HCT116 (cell line): ENCODE measurements at regions of chr19 and their contacts with region 1.

Region 1: DNA sequence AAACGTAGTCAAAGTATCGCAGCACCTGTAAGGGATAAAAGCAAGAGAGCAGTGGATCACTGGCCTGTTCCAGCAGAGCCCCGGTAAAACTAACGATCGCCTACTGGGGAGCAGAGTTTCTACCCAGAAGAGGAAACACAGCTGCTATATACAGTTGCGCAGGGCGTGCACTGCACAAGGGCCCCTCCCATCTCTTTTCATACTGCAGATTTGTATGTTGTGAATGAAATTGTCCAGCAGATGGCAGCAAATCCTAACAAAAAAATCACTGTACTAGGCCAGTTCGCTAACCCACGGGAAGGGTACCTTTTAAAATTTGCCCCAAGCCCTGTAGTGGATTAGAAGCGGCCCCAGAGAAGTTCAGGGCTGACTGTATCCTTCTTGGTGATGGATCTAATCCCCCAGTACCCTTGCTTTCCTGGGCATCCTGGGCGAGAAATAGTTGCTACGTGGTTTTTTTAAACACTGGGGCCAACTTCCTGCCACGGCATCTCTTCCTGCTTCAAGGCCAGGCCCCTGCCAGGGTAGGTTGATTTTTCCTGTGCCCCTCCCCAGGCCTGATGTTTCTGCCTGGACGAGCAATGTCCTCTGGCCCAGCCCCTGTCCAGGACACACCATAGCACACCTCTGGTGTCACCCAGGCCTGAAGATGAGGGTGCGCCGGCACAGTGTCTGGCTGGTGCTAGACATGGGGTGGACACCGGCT is 127.0 kb downstream of the IER2 start:
- DNase-seq: peak; percentile 80
- ATAC-seq: peak; percentile 94
- H3K4me3 ChIP-seq: peak overlapping the region; percentile 33 to 35
- H3K27ac ChIP-seq: peak overlapping the region; percentile 11; the same call in 1 of the 2 replicates
- H3K4me1 ChIP-seq: peaks cover 4 to 32% of the 10 kb centered on the region in 2 experiments; a peak in 3 of 4 replicates
- H3K27me3 ChIP-seq: no peaks in the 10 kb centered on the region
- CTCF ChIP-seq: peak; percentile 47 to 88 (median 74)
- POLR2A ChIP-seq: no peak
- RAD21 ChIP-seq: peak; percentile 92

Region 2: DNA sequence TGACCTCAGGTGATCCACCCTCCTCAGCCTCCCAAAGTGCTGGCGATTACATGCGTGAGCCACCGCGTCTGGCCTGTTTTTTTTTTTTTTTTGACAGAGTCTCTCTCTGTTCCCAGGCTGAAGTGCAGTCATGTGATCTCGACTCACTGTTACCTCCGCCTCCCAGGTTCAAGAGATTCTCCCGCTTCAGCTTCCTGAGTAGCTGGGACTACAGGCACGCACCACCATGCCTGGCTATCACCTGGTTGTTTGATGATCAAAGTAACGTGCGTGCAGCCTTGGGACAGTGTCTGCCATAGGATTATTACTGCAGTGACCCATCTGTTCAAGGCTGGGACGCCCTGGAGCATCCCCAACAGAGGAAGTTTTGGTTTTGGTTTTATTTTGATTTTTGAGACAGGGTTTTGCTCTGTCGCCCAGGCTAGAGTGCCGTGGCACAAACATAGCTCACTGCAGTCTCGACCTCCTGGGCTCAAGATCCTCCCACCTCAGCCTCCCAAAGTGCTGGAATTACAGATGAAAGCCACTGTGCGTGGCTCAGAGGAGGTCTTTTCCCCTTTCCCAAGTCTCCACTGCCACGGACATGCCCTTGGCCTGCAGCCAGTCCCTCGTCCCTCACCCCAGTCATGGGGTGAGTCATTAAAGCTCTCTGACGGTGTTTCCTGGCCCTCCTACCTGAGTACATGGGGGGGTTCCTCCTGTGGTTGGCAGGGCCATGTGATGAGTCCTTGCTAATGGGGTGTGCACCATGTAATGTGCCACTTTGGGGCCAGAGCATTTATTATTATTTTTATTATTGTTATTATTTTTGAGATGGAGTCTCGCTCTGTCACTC is 61.5 kb before region 1 on chr19:
- CTCF ChIA-PET with region 1: no interaction called
- POLR2A ChIA-PET with region 1: no interaction called
- RAD21 ChIA-PET with region 1: no interaction called
- intact Hi-C with region 1: no loop called
- DNase-seq: no peak
- ATAC-seq: peak; percentile 44; the same call in 1 of the 2 replicates
- H3K4me3 ChIP-seq: no peak overlapping the region; a peak in 1 of 4 replicates
- H3K27ac ChIP-seq: no peak overlapping the region
- H3K4me1 ChIP-seq: peaks cover 6 to 8% of the 10 kb centered on the region in 2 experiments
- H3K27me3 ChIP-seq: no peaks in the 10 kb centered on the region
- CTCF ChIP-seq: no peak
- POLR2A ChIP-seq: no peak
- RAD21 ChIP-seq: no peak

Region 3: DNA sequence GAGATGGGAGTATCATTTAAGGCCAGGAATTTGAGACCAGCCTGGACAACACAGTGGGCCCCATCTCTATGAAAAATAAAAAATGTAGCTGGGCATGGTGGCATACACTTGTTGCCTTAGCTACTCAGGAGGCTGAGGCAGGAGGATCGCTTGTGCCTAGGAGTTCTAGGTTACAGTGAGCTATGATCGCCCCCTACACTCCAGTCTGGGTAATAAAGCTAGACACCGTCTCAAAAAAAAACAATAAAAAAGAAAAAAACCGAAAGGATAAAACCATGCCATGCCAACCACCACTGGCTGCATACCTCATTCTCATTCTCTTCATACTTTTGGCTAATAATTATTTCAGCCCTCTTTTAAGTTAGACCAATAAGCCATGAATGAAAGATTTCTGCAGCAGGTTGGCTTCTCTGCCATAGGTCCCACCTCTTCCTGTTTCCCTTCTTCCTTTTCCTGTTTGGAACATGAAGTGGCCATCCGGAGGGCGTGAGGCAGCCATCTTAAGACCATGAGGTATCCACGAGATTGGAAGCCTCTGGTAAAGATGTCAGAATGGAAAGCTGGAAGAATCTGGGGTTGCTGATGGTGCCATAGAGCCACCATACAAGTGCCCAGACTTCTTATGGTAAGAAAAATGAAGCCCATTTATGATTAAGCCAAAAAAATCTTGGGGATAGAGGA is 57.7 kb after region 1 on chr19:
- CTCF ChIA-PET with region 1: interaction called, 99 read pairs
- POLR2A ChIA-PET with region 1: interaction called, 4 read pairs
- RAD21 ChIA-PET with region 1: interaction called, 11 to 14 read pairs
- intact Hi-C with region 1: loop called (anchors 1 kb)
- DNase-seq: peak; percentile 90
- ATAC-seq: peak; percentile 91
- H3K4me3 ChIP-seq: peak overlapping the region; percentile 70 to 84
- H3K27ac ChIP-seq: peak overlapping the region; percentile 64
- H3K4me1 ChIP-seq: peaks cover 2 to 15% of the 10 kb centered on the region in 2 experiments; a peak in 2 of 4 replicates
- H3K27me3 ChIP-seq: no peaks in the 10 kb centered on the region
- CTCF ChIP-seq: peak; percentile 67 to 85 (median 78)
- POLR2A ChIP-seq: peak; percentile 40
- RAD21 ChIP-seq: peak; percentile 82

Region 4: DNA sequence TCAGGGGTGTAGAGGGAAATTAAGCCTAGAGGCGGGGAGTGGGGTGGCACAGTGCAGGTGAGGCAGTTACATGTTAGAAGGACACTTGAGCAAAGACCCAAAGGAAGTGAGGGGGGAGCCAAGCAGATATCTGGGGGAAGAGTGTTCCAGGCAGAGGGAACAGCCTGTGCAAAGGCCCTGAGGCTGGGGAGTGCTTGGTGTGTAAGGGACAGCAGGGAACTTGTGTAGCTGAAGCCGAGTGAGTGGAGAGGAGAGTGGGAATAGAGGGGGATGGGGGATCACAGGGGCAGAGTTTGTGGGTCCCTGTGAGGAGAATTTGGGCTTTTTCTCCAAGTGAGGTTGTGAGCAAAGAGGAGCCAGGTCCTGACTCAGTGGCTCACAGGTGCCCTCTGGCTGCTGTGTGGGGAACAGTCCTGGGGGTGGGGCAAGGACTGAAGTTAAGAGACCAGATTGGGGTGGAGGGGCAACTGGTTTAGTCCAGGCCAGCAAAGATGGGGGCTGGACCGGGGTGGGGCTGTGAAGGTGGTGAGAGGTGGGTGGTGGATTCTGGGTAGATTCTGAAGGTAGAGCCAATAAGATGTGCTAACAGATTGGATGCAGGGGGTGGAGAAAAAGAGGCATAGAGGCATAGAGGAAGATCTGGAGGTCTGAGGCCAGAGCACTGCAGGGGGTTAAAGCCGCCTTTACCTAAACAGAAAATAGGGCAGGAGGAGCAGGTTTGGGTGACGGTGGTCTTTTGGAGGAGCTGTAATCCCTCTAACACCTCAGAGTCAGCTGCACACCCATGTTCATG is 153.7 kb after region 1 on chr19:
- CTCF ChIA-PET with region 1: interaction called, 7 read pairs
- POLR2A ChIA-PET with region 1: no interaction called
- RAD21 ChIA-PET with region 1: no interaction called
- intact Hi-C with region 1: loop called (anchors 1 kb)
- DNase-seq: peak; percentile 51
- ATAC-seq: peak; percentile 93
- H3K4me3 ChIP-seq: no peak overlapping the region
- H3K27ac ChIP-seq: no peak overlapping the region
- H3K4me1 ChIP-seq: no peaks in the 10 kb centered on the region; a peak in 1 of 4 replicates
- H3K27me3 ChIP-seq: no peaks in the 10 kb centered on the region
- CTCF ChIP-seq: peak; percentile 84 to 96 (median 93)
- POLR2A ChIP-seq: no peak
- RAD21 ChIP-seq: peak; percentile 88

Region 5: DNA sequence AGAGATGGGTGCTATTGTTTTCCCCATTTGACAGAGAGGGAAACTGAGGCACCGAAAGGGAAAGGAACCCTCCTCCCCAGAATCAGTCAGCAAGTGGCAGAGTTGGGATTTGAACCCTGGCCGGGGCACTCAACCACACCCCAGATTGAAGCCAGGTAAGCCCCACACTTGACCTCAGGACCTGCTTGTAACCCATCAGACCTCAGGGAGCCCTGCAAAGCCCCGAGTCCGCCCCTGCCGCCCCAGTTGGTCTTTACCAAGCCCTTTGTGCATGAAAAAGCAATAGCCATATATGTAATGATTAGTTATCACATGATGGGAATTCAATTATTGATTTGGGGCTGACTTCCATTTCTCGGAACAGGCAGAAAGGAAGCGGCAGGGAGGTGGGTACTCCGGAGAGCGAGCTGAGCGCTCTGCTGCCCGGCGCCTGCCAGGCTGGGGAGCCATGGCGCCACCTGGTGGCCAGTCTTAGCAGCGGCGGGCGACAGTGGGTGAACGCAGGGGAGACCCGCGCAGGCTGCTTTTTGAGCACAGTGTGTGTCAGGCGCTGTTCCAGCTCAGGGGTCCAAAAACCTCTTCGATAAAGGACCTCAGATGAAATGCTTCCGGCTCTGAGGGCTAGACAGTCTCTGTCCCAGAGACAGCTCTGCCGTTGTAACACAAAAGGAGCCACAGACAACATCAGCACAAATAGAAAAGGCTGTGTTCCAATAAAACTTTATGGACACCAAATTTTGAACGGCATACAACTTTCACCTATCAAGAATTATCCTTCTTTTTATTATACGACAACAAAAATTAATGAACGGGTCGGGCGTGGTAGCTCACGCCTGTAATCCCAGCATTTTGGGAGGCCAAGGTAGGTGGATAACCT is 311.9 kb after region 1 on chr19:
- CTCF ChIA-PET with region 1: interaction called, 42 read pairs
- POLR2A ChIA-PET with region 1: interaction called, 9 read pairs
- RAD21 ChIA-PET with region 1: interaction called, 3 to 8 read pairs
- intact Hi-C with region 1: loop called (anchors 1 kb)
- DNase-seq: peak; percentile 49
- ATAC-seq: peak; percentile 100
- H3K4me3 ChIP-seq: peak overlapping the region; percentile 26 to 41
- H3K27ac ChIP-seq: no peak overlapping the region
- H3K4me1 ChIP-seq: peaks cover 0 to 10% of the 10 kb centered on the region in 2 experiments; a peak in 2 of 4 replicates
- H3K27me3 ChIP-seq: no peaks in the 10 kb centered on the region
- CTCF ChIP-seq: peak; percentile 93 to 98 (median 98)
- POLR2A ChIP-seq: no peak
- RAD21 ChIP-seq: peak; percentile 89

Region 6: DNA sequence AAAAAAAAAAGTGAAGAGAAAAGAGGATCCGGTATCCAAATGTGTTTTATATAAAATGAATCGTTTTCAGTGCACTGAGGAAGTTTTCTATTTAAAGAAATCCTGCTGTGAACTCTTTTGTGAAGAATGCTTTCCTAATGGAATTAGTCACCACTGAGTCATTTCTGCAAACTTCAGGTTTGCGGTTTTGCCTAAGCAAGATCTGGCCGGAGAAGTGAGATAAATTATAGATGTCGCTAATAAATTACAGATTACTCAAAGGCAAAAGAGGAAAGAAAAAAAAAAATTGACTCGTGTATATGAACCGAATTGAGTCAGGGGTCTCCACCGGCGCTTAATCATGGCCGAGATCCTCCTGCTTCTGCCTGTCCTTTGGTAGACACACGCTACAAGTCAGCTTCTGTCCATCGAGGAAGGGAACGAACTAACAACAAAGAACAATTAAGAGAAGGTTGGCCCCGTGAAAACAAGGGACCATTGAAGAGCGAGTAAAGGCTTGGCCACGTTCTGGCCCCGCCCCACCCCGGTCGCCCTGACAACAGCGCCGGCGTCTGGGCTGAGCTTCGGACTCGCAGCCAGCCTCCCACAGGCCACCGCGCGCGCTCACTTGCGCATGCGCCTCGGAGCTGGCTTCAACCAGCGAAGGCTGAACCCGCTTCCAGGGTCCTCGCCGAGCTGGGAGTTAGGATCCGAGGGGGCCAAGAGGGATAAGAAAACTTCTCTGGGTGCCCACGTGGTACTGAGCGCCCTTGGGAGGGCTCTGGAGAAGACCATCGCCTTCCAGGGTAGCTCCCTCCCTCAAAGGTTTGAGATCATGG is 454.1 kb after region 1 on chr19:
- CTCF ChIA-PET with region 1: interaction called, 4 read pairs
- POLR2A ChIA-PET with region 1: no interaction called
- RAD21 ChIA-PET with region 1: no interaction called
- intact Hi-C with region 1: loop called (anchors 10 kb)
- DNase-seq: peak; percentile 94
- ATAC-seq: peak; percentile 98
- H3K4me3 ChIP-seq: peak overlapping the region; percentile 76 to 77
- H3K27ac ChIP-seq: peak overlapping the region; percentile 100
- H3K4me1 ChIP-seq: peaks cover 24 to 32% of the 10 kb centered on the region in 2 experiments
- H3K27me3 ChIP-seq: no peaks in the 10 kb centered on the region
- CTCF ChIP-seq: no peak
- POLR2A ChIP-seq: peak; percentile 69
- RAD21 ChIP-seq: no peak